Right cardiac atrium (tissue), 5 donors: ENCODE measurements at regions of chr5 and their contacts with region 1.

Region 1: GRCh38 chr5:173155912-173156311 is 11.6 kb downstream of the BNIP1 start:
- DNase-seq: no peak
- ATAC-seq: no peak
- H3K4me3 ChIP-seq: no peak overlapping the region
- H3K27ac ChIP-seq: no peak overlapping the region
- H3K4me1 ChIP-seq: no peaks in the 10 kb centered on the region
- H3K27me3 ChIP-seq: no peaks in the 10 kb centered on the region

Region 2: DNA sequence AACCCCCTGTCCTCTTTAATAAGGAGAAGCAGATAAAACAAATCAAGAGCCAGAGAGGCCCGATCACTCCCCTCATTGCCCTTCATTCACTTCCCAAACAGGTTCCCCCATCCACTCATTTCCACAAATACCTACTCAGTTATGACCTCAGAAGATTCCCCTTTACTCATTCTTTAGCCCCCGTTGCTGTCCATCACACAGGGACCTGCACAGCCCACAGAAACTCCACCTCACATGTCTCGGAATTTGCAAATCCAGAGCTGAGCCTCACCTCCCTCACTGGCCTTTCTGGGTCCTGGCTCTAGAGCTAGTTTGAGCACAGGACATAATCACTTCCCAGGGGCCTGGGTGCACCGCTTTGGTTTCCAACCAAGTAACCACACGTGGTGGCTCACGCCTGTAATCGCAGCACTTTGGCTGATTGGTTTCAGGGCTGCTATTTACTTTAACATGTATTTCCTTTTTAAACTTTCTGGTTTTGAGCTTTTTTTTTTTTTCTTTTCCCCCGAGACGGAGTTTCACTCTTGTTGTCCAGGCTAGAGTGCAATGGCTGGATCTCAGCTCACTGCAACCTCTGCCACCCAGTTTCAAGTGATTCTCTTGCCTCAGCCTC is 154.6 kb before region 1 on chr5:
- intact Hi-C with region 1: loop called in 1 of 4 experiments (anchors 10 kb)
- DNase-seq: no peak
- ATAC-seq: no peak
- H3K4me3 ChIP-seq: no peak overlapping the region
- H3K27ac ChIP-seq: no peak overlapping the region
- H3K4me1 ChIP-seq: peaks cover 18% of the 10 kb centered on the region
- H3K27me3 ChIP-seq: no peaks in the 10 kb centered on the region

Region 3: GRCh38 chr5:173123416-173123815 is 32.5 kb before region 1 on chr5:
- intact Hi-C with region 1: no loop called
- DNase-seq: no peak
- ATAC-seq: no peak
- H3K4me3 ChIP-seq: no peak overlapping the region
- H3K27ac ChIP-seq: no peak overlapping the region
- H3K4me1 ChIP-seq: no peaks in the 10 kb centered on the region
- H3K27me3 ChIP-seq: no peaks in the 10 kb centered on the region